ENCODE measurements at regions of chr17 and their contacts with region 1.

Region 1: GRCh38 chr17:35214631-35215273 is 20.6 kb upstream of the SLC35G3 start:
- DNase-seq: peak; percentile 61
- ATAC-seq: peak; percentile 55
- H3K4me3 Mint-ChIP-seq: peak overlapping the region; percentile 71
- H3K27ac Mint-ChIP-seq: peak overlapping the region; percentile 92
- H3K4me1 Mint-ChIP-seq: peaks cover 80% of the 10 kb centered on the region
- H3K27me3 Mint-ChIP-seq: no peaks in the 10 kb centered on the region

Region 2: GRCh38 chr17:35175638-35176415 is 38.9 kb before region 1 on chr17:
- POLR2A ChIA-PET with region 1: interaction called, 10 read pairs
- DNase-seq: no peak
- ATAC-seq: no peak
- H3K4me3 Mint-ChIP-seq: no peak overlapping the region
- H3K27ac Mint-ChIP-seq: peak overlapping the region; percentile 14
- H3K4me1 Mint-ChIP-seq: peaks cover 56% of the 10 kb centered on the region
- H3K27me3 Mint-ChIP-seq: no peaks in the 10 kb centered on the region

Region 3: GRCh38 chr17:35189291-35189690 is 25.5 kb before region 1 on chr17:
- POLR2A ChIA-PET with region 1: interaction called, 25 read pairs
- DNase-seq: no peak
- ATAC-seq: no peak
- H3K4me3 Mint-ChIP-seq: peak overlapping the region; percentile 77
- H3K27ac Mint-ChIP-seq: peak overlapping the region; percentile 78
- H3K4me1 Mint-ChIP-seq: peaks cover 50% of the 10 kb centered on the region
- H3K27me3 Mint-ChIP-seq: no peaks in the 10 kb centered on the region

Region 4: DNA sequence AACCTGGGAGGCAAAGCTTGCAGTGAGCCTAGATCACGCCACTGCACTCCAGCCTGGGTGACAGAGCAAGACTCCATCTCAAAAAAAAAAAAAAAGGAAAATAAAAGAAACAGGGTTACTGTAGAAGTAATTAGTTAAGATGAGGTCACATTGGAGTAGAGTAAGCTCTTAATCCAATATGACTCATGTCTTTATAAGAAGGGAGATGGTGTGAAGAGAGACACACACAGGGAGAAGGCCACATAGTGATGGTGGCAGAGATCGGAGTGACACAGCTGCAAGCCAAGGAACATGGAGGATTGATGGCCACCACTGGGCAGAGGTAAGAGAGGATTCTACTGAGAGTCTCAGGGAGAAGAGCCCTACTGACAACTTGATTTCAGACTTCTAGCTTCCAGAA is 12.8 kb after region 1 on chr17:
- POLR2A ChIA-PET with region 1: interaction called, 13 read pairs
- DNase-seq: no peak
- ATAC-seq: no peak
- H3K4me3 Mint-ChIP-seq: no peak overlapping the region
- H3K27ac Mint-ChIP-seq: no peak overlapping the region
- H3K4me1 Mint-ChIP-seq: peaks cover 22% of the 10 kb centered on the region
- H3K27me3 Mint-ChIP-seq: no peaks in the 10 kb centered on the region

Region 5: DNA sequence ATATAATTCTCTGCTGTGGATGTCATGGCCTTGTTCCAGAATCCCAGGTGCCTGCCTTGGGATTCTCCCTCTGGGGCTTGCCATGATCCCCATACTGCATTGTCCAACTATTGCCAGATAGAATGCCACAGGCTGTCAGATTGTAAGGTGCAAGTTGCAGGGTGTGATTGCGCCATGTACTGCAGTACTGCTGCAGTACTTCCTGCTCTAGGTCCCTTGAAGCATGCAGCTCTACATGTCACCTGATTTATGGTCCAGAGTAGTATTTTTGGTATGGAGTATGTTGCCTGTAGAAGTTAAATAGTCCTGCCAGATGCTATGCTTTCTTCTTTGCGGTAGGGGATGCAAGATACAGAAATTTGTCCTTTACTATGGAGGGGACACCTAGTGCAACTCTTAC is 21.2 kb after region 1 on chr17:
- POLR2A ChIA-PET with region 1: interaction called, 296 read pairs
- DNase-seq: no peak
- ATAC-seq: peak; percentile 73
- H3K4me3 Mint-ChIP-seq: peak overlapping the region; percentile 5
- H3K27ac Mint-ChIP-seq: peak overlapping the region; percentile 56
- H3K4me1 Mint-ChIP-seq: peaks cover 55% of the 10 kb centered on the region
- H3K27me3 Mint-ChIP-seq: no peaks in the 10 kb centered on the region

Region 6: DNA sequence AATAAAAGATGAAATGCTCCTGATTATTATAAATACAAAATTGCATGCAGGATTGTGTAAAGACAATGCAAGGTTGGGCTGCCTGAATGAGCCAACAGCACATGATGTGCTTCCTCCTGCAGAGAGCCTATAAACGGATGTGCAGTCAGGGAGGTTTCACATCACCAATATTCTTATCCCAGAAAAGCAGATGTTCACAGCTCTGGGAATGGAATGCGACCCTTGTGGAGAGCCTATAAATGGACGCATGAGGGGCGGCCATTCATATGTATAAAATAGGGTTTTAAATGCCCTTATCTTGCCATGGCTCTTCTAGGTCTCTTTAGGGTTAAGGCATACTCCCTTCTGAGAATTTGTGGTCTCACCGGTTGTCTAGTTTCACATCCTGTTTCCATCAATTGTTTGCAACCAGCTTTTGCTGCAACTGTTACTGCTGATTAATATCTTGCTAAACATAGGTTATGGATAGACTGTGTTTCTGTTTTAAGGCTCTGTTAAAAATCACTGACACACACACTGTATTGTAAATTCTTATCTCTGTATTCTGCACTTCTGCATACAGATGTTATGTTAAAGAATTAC is 126.8 kb after region 1 on chr17:
- POLR2A ChIA-PET with region 1: no interaction called
- DNase-seq: no peak
- ATAC-seq: no peak
- H3K4me3 Mint-ChIP-seq: peak overlapping the region; percentile 38
- H3K27ac Mint-ChIP-seq: no peak overlapping the region
- H3K4me1 Mint-ChIP-seq: peaks cover 29% of the 10 kb centered on the region
- H3K27me3 Mint-ChIP-seq: peaks cover 69% of the 10 kb centered on the region